ENCODE measurements at regions of chr13 and their contacts with region 1.

Region 1: GRCh38 chr13:110989331-110989730 is 74.5 kb upstream of the ANKRD10 start:
- DNase-seq: no peak
- H3K4me3 ChIP-seq: no peak overlapping the region
- H3K27ac ChIP-seq: no peak overlapping the region
- H3K4me1 ChIP-seq: no peaks in the 10 kb centered on the region
- H3K27me3 ChIP-seq: peaks cover 2% of the 10 kb centered on the region
- CTCF ChIP-seq: no peak

Region 2: DNA sequence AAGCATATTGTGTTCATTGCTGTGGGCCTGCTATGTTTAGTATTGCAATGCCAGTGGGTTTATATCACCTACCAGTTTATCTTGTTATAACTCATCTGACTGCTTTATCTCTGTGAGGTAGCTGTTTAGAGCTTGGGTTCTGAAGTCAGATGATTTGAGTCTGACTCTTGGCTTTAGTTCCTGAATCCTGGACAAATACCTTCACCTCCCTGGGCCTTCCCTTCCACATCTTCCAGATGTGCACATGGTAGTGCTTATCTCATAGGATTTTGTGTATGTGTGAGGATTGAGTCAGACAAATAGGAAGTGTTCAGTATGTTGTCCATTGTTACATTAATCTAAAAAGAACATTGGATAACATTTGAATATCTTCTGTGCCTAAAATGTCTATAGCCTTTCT is 10.9 kb before region 1 on chr13:
- CTCF ChIA-PET with region 1: no interaction called
- dilution Hi-C with region 1: no loop called
- in situ Hi-C with region 1: no loop called
- intact Hi-C with region 1: no loop called
- DNase-seq: no peak
- H3K4me3 ChIP-seq: no peak overlapping the region
- H3K27ac ChIP-seq: no peak overlapping the region
- H3K4me1 ChIP-seq: no peaks in the 10 kb centered on the region
- H3K27me3 ChIP-seq: no peaks in the 10 kb centered on the region
- CTCF ChIP-seq: no peak

Region 3: GRCh38 chr13:111153279-111153976 is 164.1 kb after region 1 on chr13:
- CTCF ChIA-PET with region 1: no interaction called
- dilution Hi-C with region 1: no loop called
- in situ Hi-C with region 1: no loop called
- intact Hi-C with region 1: no loop called
- DNase-seq: peak; percentile 90
- H3K4me3 ChIP-seq: peak overlapping the region; percentile 54 to 87 (median 81)
- H3K27ac ChIP-seq: peak overlapping the region; percentile 86
- H3K4me1 ChIP-seq: peaks cover 14% of the 10 kb centered on the region
- H3K27me3 ChIP-seq: no peaks in the 10 kb centered on the region
- CTCF ChIP-seq: peak in 1 of 2 donors; percentile 31

Region 4: GRCh38 chr13:111954661-111955406 is 965.5 kb after region 1 on chr13:
- CTCF ChIA-PET with region 1: no interaction called
- dilution Hi-C with region 1: loop called (anchors 25 kb)
- in situ Hi-C with region 1: no loop called
- intact Hi-C with region 1: no loop called
- DNase-seq: no peak
- H3K4me3 ChIP-seq: no peak overlapping the region
- H3K27ac ChIP-seq: no peak overlapping the region
- H3K4me1 ChIP-seq: no peaks in the 10 kb centered on the region
- H3K27me3 ChIP-seq: no peaks in the 10 kb centered on the region
- CTCF ChIP-seq: no peak